Right ventricle myocardium inferior (tissue), 1 donor: ENCODE measurements at regions of chr13 and their contacts with region 1.

Region 1: GRCh38 chr13:57624565-57625435 is 6.7 kb upstream of the PCDH17 start:
- DNase-seq: no peak
- ATAC-seq: no peak

Region 2: GRCh38 chr13:57634839-57635165 is 10.0 kb after region 1 on chr13:
- intact Hi-C with region 1: no loop called
- DNase-seq: no peak
- ATAC-seq: no peak

Region 3: DNA sequence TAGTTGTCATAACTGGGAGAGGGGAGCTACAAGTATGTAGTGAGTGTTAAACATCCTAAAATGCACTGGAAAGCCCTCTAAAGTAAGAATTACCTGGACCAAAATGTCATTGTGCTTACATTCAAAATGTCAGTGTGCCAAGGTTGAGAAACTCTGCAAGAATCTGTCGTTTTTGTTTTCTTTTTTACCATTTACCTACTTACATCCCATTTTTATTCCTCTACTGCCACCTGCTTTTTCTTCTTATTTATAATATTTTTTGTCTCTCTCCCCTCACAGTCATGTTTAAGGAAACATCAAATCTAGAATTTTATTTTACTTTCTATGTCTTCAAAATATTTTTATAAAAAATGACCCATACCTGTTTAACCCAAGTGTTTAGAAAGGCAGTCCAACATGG is 233.1 kb after region 1 on chr13:
- intact Hi-C with region 1: loop called (anchors 2 kb)
- DNase-seq: no peak
- ATAC-seq: no peak

Region 4: DNA sequence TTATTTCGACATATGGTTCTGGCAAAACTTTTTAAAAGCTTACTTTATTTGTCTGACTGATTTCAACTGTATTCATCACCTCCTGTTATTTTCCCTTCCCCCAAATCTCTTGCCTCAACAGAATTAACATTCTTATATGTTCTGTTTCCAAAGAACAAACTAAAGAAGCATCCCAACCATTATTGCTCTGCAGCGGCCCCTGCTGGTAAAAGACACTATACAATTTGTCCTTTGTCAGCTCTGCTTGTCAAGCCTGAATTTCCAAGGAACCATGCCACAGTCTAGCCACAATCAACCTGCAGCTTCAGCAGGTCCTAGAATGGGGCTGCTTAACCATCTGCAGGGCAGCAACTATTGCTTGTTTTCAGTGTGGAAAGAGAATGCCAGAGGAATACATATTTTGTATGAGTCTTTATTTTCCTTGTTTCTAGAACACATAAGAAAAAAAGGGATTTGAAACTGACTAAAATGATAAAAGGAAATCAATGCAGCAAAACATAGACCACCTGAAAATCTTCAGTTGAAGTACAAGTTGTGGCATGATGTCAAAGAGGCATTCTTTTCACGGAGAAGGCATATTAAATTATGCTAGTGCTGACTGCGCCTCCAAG is 1693.6 kb after region 1 on chr13:
- intact Hi-C with region 1: loop called (anchors 5 kb)
- DNase-seq: peak; percentile 78
- ATAC-seq: no peak